AG04449 (cell line): ENCODE measurements at regions of chr4 and their contacts with region 1.

Region 1: DNA sequence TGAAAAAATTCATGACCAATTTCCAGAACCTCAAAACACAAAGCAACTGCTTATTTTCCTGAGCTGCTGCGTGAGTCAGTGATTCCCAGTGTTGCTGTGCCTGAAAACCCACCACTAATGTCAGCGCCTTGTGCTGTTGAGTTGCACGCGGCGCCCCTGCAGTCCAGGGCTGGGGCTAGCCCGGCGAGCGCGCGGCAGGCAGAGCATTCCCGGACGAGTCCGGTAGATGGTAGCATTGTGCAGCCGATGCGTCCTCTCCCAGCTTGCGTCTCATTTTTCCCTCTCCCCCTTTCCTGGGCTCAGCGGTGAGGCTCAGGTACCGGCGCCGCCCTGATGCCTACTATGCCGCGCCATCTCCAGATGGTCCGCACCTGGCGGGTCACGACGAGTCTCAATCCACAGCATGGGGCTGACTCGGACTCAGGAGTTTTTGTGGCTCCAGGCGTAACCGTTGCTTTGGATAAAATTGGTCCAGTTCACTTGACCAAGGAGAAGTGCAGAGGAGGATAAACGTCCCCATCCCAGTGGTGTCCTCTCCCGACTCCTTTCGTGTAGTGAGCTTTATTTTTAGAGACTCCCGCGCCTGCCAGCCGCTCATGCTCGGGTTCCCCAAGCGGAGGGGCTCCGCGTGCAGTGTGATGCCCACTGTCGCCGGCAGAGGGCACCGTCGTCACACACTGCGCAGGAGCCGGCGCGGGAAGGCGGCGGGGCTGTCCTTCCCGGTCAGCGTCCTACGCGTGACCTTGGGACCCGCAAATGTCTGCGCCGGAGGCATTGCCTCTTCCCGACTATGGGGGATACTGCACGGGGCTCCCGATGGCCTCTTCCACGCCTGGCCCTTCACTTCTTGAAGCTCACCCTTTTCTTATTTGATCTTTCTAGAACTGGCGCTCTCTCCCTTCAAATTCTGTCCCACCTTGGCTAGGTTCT is 53.6 kb upstream of the IGFBP7 start:
- DNase-seq: no peak
- H3K4me3 ChIP-seq: peak overlapping the region; percentile 77
- CTCF ChIP-seq: peak; percentile 99

Region 2: DNA sequence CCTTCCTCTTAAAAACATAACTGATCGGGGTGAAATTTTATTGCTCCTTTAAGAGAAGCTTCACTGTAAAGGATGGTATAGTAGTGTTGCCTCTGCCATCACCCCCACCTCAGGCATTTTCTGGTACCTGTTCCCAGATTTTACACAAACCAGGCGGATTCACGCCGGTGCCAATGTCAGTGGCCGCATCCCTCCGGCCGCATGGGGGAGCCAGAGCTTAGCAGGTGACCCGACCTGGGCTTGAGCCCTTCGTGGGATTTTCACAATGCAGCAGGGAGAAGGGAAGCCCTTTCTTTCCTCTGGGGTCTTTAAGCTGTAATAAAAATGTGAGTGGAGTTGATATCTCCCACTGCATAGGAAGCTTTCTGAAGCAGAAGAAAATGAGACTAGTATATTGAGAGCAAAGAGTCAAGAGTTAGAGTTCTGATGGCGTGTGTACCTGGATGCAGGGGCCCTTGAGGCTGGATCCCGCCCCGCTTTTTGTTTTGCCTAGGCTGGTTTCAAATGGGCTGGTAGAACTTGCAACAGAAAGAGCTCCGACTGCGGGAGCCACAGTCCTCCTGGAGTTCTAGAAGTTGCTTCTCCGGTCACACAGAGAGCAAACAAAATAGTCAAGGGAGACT is 125.7 kb before region 1 on chr4:
- CTCF ChIA-PET with region 1: interaction called, 73 read pairs
- POLR2A ChIA-PET with region 1: no interaction called
- DNase-seq: no peak
- H3K4me3 ChIP-seq: no peak overlapping the region
- CTCF ChIP-seq: peak; percentile 84

Region 3: GRCh38 chr4:57074744-57075143 is 89.1 kb before region 1 on chr4:
- CTCF ChIA-PET with region 1: interaction called, 10 read pairs
- POLR2A ChIA-PET with region 1: no interaction called
- DNase-seq: peak; percentile 73
- H3K4me3 ChIP-seq: no peak overlapping the region
- CTCF ChIP-seq: no peak

Region 4: GRCh38 chr4:57147335-57148060 is 16.3 kb before region 1 on chr4:
- CTCF ChIA-PET with region 1: interaction called, 56 read pairs
- POLR2A ChIA-PET with region 1: no interaction called
- DNase-seq: peak; percentile 71
- H3K4me3 ChIP-seq: no peak overlapping the region
- CTCF ChIP-seq: no peak

Region 5: DNA sequence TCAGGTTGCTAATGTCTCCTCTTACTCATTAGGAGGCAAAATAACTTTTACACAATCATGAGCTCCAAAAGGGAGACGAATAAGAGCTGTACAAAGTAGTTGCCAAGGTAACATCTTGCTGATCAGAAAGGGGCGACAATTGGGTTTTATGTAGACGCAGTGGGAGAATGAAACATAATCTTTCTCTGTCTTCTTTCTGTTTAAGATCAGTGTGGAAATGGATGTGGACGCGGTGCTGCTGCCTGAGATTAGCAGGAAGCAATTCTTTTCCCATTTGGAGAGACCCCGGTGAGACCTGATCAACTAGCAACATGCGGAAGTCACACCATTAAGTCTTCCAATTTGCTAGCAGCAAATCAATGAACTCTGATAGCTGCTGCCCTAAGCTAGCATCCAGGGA is 37.1 kb after region 1 on chr4:
- CTCF ChIA-PET with region 1: interaction called, 12 read pairs
- POLR2A ChIA-PET with region 1: no interaction called
- DNase-seq: no peak
- H3K4me3 ChIP-seq: no peak overlapping the region
- CTCF ChIP-seq: no peak

Region 6: GRCh38 chr4:57426779-57427395 is 263.1 kb after region 1 on chr4:
- CTCF ChIA-PET with region 1: interaction called, 131 read pairs
- POLR2A ChIA-PET with region 1: interaction called, 3 read pairs
- DNase-seq: peak; percentile 19
- H3K4me3 ChIP-seq: no peak overlapping the region
- CTCF ChIP-seq: peak; percentile 84

Region 7: DNA sequence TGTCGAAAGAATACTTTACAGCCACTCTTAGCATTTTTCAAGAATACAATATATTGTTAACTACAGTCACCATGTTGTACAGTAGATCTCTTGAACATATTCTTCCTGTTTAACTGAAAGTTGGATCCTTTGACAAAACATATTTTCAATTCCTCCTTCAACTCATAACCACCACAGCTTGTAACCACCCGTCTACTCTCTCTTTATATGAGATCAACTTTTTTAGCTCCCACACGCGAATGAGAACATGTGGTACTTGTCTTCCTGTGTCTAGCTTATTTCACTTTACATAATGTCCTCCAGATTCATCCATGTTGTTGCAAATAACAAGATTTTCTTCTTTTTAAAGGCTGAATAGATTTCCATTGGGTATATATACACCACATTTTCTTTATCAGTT is 284.7 kb after region 1 on chr4:
- CTCF ChIA-PET with region 1: interaction called, 49 read pairs
- POLR2A ChIA-PET with region 1: no interaction called
- DNase-seq: no peak
- H3K4me3 ChIP-seq: no peak overlapping the region
- CTCF ChIP-seq: no peak